Caco-2 (cell line): ENCODE measurements at regions of chr2 and their contacts with region 1.

Region 1: GRCh38 chr2:120012771-120013596 is at the start of gene EPB41L5:
- DNase-seq: peak; percentile 95 to 96
- H3K4me3 ChIP-seq: peak within 1 kb of the TSS; percentile 62
- H3K4me3 Mint-ChIP-seq: peak within 1 kb of the TSS; percentile 74
- H3K27ac Mint-ChIP-seq: peak within 1 kb of the TSS; percentile 81
- H3K4me1 ChIP-seq: peaks cover 10% of the 10 kb centered on the region
- H3K4me1 Mint-ChIP-seq: peaks cover 24% of the 10 kb centered on the region
- H3K27me3 ChIP-seq: no peaks in the 10 kb centered on the region
- H3K27me3 Mint-ChIP-seq: no peaks in the 10 kb centered on the region
- CTCF ChIP-seq: no peak
- total RNA-seq, gene EPB41L5: 81.9 and 83.0 TPM in 2 replicates

Region 2: DNA sequence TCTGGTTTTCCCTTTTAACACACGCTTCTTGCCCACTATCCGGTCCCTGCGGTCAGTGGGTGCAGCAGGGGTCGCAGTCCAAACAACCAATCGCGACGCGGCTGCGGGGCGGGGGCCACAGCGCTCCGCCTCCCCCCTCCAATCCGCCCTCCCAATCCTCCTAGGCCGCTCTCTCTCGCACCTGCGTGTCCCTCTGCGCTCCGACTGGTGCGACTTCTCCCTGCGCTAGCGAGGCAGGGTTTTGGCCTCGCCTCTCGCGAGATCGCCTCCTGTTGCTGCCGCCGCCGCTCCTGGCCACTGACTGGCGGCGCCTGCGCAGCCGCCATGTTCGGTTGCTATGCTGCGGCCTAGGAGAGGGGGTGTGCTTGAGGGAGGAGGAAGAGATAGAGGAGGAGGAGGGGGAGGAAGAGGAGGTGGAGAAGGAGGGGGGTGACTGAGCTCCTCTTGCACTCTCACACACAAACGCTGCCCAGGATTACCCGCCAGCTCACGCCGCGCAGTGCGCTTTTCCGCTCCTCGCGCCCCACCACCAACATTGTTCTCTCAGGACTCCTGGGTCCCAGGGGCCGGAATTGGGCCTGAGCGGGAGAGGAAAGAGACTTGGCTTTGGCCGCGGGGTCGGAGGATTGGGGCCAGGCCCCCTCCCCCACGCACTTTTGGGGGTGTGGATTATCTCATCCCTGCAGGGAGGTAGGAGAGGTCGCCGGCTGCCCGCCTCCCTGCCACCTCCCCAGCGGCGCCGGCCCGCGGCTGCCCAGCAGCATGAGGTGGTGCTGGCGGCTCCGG is 253.3 kb before region 1 on chr2 and contains the start of gene PTPN4:
- CTCF ChIA-PET with region 1: no interaction called
- POLR2A ChIA-PET with region 1: no interaction called
- intact Hi-C with region 1: loop called (anchors 10 kb)
- DNase-seq: peak; percentile 98 to 99
- H3K4me3 ChIP-seq: peak within 1 kb of the TSS; percentile 81
- H3K4me3 Mint-ChIP-seq: peak within 1 kb of the TSS; percentile 84
- H3K27ac Mint-ChIP-seq: peak within 1 kb of the TSS; percentile 92
- H3K4me1 ChIP-seq: peaks cover 4% of the 10 kb centered on the region; the same call in 1 of the 2 replicates
- H3K4me1 Mint-ChIP-seq: peaks cover 24% of the 10 kb centered on the region
- H3K27me3 ChIP-seq: no peaks in the 10 kb centered on the region
- H3K27me3 Mint-ChIP-seq: no peaks in the 10 kb centered on the region
- CTCF ChIP-seq: no peak
- total RNA-seq, gene PTPN4: 45.8 and 46.8 TPM in 2 replicates

Region 3: DNA sequence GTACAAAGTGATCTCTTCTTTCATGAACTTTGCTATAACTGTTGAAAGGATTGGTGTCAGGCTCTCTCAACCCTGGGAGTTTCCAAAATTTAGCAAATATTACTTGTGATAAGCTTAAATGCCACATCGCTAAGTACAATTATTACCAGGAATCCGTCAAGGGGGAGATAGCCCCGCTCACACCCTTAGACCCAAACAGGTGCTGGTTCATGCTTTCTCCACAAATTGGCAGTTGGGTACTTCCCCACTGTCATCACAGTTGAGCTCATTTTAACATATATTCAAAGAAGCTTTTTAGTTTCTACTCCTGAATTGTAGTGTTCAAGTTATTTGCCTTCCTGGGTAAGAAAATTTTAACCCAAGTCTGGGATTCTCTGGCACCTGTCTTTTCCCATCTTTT is 29.9 kb before region 1 on chr2:
- CTCF ChIA-PET with region 1: no interaction called
- POLR2A ChIA-PET with region 1: no interaction called
- intact Hi-C with region 1: no loop called
- DNase-seq: no peak
- H3K4me3 ChIP-seq: no peak overlapping the region
- H3K4me3 Mint-ChIP-seq: no peak overlapping the region
- H3K27ac Mint-ChIP-seq: no peak overlapping the region
- H3K4me1 ChIP-seq: peaks cover 12% of the 10 kb centered on the region
- H3K4me1 Mint-ChIP-seq: no peaks in the 10 kb centered on the region
- H3K27me3 ChIP-seq: no peaks in the 10 kb centered on the region
- H3K27me3 Mint-ChIP-seq: no peaks in the 10 kb centered on the region
- CTCF ChIP-seq: no peak

Region 4: GRCh38 chr2:119996148-119996547 is 16.8 kb before region 1 on chr2:
- CTCF ChIA-PET with region 1: no interaction called
- POLR2A ChIA-PET with region 1: interaction called, 7 read pairs
- intact Hi-C with region 1: loop called (anchors 2 kb)
- DNase-seq: no peak
- H3K4me3 ChIP-seq: no peak overlapping the region
- H3K4me3 Mint-ChIP-seq: no peak overlapping the region
- H3K27ac Mint-ChIP-seq: no peak overlapping the region
- H3K4me1 ChIP-seq: no peaks in the 10 kb centered on the region
- H3K4me1 Mint-ChIP-seq: peaks cover 3% of the 10 kb centered on the region
- H3K27me3 ChIP-seq: no peaks in the 10 kb centered on the region
- H3K27me3 Mint-ChIP-seq: no peaks in the 10 kb centered on the region
- CTCF ChIP-seq: no peak

Region 5: DNA sequence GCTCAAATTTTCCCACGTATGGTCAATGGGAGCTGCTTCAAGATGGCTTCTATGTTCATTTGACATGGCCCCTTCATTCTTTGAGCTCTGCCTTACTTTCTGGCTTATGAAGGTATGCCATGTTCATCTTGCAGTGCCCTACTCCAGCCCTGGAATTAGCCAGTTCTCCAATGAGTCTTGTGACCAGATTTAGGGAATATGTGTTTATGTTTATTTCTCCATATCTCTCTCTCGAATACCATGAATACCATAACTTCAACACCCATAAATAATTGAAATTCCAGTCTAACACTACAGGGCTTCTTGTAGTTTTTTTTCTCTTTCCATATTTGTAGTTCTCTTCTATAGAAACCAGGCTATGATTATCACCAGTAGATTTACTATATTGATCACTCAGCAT is 39.6 kb after region 1 on chr2:
- CTCF ChIA-PET with region 1: no interaction called
- POLR2A ChIA-PET with region 1: interaction called, 6 read pairs
- intact Hi-C with region 1: loop called (anchors 1 kb)
- DNase-seq: peak in 1 of 2 experiments; percentile 41
- H3K4me3 ChIP-seq: no peak overlapping the region
- H3K4me3 Mint-ChIP-seq: peak overlapping the region; percentile 47
- H3K27ac Mint-ChIP-seq: peak overlapping the region; percentile 69
- H3K4me1 ChIP-seq: peaks cover 26% of the 10 kb centered on the region
- H3K4me1 Mint-ChIP-seq: peaks cover 24% of the 10 kb centered on the region
- H3K27me3 ChIP-seq: no peaks in the 10 kb centered on the region
- H3K27me3 Mint-ChIP-seq: no peaks in the 10 kb centered on the region
- CTCF ChIP-seq: no peak

Region 6: GRCh38 chr2:120066800-120067547 is 54.0 kb after region 1 on chr2:
- CTCF ChIA-PET with region 1: no interaction called
- POLR2A ChIA-PET with region 1: interaction called, 7 read pairs
- intact Hi-C with region 1: loop called (anchors 2 kb)
- DNase-seq: peak; percentile 54 to 69
- H3K4me3 ChIP-seq: no peak overlapping the region
- H3K4me3 Mint-ChIP-seq: peak overlapping the region; percentile 66
- H3K27ac Mint-ChIP-seq: peak overlapping the region; percentile 88
- H3K4me1 ChIP-seq: peaks cover 61% of the 10 kb centered on the region
- H3K4me1 Mint-ChIP-seq: peaks cover 39% of the 10 kb centered on the region
- H3K27me3 ChIP-seq: no peaks in the 10 kb centered on the region
- H3K27me3 Mint-ChIP-seq: no peaks in the 10 kb centered on the region
- CTCF ChIP-seq: no peak

Region 7: DNA sequence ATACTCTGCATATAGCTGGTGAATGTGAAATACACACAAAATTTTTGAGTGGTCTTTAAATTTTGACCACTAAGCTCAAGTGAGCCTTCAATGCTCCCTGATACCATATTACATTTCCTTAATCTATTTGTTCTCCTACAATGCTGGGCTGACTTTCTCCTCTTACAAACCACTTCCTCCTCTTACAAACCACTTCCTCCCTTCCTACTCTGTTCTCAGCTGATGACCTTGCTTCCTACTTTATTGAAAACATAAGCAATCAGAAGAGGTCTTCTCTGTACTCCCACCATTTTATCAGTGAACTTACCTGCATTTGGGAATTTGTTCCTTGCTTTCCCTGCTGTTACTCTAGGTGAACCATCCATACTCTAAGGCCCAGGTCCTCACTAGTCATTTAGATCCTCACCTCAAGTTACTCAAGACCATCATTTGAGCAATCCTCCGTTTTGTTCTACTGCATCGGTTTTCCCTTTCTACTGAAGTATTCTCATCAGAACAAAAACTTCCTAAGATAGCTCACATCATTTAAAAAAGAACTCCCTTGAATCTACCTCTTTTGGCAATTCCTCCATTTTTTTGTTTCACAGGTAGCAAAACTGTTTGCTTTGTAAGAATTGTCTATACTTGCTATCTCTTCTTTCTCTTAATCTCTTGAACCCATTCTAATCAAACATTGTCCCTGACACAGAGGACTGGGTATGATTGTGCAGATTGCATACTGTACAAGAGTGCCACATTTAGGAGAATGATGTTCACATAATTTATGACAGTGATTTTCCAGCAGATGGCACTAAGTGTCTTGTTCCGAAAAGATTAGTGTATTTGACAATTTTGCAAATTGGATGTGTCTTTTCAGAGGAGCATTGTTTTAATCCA is 96.4 kb after region 1 on chr2:
- CTCF ChIA-PET with region 1: no interaction called
- POLR2A ChIA-PET with region 1: no interaction called
- intact Hi-C with region 1: loop called (anchors 2 kb)
- DNase-seq: peak in 1 of 2 experiments; percentile 10
- H3K4me3 ChIP-seq: no peak overlapping the region
- H3K4me3 Mint-ChIP-seq: no peak overlapping the region
- H3K27ac Mint-ChIP-seq: no peak overlapping the region
- H3K4me1 ChIP-seq: no peaks in the 10 kb centered on the region
- H3K4me1 Mint-ChIP-seq: peaks cover 9% of the 10 kb centered on the region
- H3K27me3 ChIP-seq: no peaks in the 10 kb centered on the region
- H3K27me3 Mint-ChIP-seq: no peaks in the 10 kb centered on the region
- CTCF ChIP-seq: peak in 1 of 2 experiments; percentile 10

Region 8: GRCh38 chr2:120223034-120223912 is 210.3 kb after region 1 on chr2 and contains the start of gene TMEM185B:
- CTCF ChIA-PET with region 1: no interaction called
- POLR2A ChIA-PET with region 1: interaction called, 13 read pairs
- intact Hi-C with region 1: no loop called
- DNase-seq: peak; percentile 96 to 98
- H3K4me3 ChIP-seq: peak within 1 kb of the TSS; percentile 76
- H3K4me3 Mint-ChIP-seq: peak within 1 kb of the TSS; percentile 97
- H3K27ac Mint-ChIP-seq: peak within 1 kb of the TSS; percentile 96
- H3K4me1 ChIP-seq: peaks cover 23% of the 10 kb centered on the region
- H3K4me1 Mint-ChIP-seq: peaks cover 17% of the 10 kb centered on the region
- H3K27me3 ChIP-seq: no peaks in the 10 kb centered on the region
- H3K27me3 Mint-ChIP-seq: no peaks in the 10 kb centered on the region
- CTCF ChIP-seq: peak; percentile 54 to 77
- total RNA-seq, gene TMEM185B: 67.3 and 69.9 TPM in 2 replicates